ENCODE measurements at regions of chr13 and their contacts with region 1.

Region 1: GRCh38 chr13:32232263-32232662 is 82.9 kb downstream of the ZAR1L start:
- DNase-seq: no peak
- H3K4me3 ChIP-seq: no peak overlapping the region
- H3K27me3 ChIP-seq: no peaks in the 10 kb centered on the region
- CTCF ChIP-seq: no peak

Region 2: DNA sequence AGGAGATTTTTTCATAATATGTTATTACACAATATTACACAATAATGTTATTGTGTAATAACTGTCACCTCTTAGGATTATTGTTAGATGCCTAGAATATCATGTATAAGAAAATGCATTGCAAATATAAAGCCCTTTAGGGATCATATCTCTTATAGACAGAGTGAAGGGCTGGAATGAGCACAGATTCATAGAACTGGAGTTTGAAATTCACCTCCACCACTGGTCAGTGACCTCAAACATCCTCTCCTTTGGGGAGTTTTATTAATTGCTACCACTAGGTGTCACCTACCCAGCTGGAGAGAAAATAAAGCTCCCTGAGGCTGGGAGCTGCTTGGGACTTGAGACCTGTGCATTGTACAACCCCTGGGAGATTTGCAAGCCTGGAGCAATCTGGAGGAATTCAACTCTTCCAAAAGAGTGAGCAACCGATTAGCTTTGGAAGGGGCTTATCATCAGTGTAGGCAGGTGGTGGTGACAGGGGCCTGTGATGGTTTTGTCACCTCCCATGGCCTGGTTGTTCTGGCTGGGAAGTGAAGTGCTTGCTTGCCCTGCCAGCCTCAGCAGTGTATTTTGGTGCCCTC is 231.0 kb before region 1 on chr13:
- CTCF ChIA-PET with region 1: no interaction called
- POLR2A ChIA-PET with region 1: no interaction called
- DNase-seq: no peak
- H3K4me3 ChIP-seq: no peak overlapping the region
- H3K27me3 ChIP-seq: no peaks in the 10 kb centered on the region
- CTCF ChIP-seq: peak; percentile 65

Region 3: GRCh38 chr13:32246468-32246867 is 14.2 kb after region 1 on chr13:
- CTCF ChIA-PET with region 1: interaction called, 22 read pairs
- POLR2A ChIA-PET with region 1: no interaction called
- DNase-seq: no peak
- H3K4me3 ChIP-seq: no peak overlapping the region
- H3K27me3 ChIP-seq: no peaks in the 10 kb centered on the region
- CTCF ChIP-seq: peak; percentile 77

Region 4: GRCh38 chr13:32390048-32390447 is 157.8 kb after region 1 on chr13:
- CTCF ChIA-PET with region 1: no interaction called
- POLR2A ChIA-PET with region 1: no interaction called
- DNase-seq: no peak
- H3K4me3 ChIP-seq: no peak overlapping the region
- H3K27me3 ChIP-seq: no peaks in the 10 kb centered on the region
- CTCF ChIP-seq: no peak